ENCODE measurements at regions of chr3 and their contacts with region 1.

Region 1: GRCh38 chr3:198051836-198052235 is 91.8 kb downstream of the LMLN start:
- DNase-seq: no peak
- ATAC-seq: no peak
- H3K4me3 Mint-ChIP-seq: no peak overlapping the region
- H3K27ac Mint-ChIP-seq: no peak overlapping the region
- H3K4me1 Mint-ChIP-seq: no peaks in the 10 kb centered on the region
- H3K27me3 Mint-ChIP-seq: peaks cover 6% of the 10 kb centered on the region
- CTCF ChIP-seq: no peak

Region 2: DNA sequence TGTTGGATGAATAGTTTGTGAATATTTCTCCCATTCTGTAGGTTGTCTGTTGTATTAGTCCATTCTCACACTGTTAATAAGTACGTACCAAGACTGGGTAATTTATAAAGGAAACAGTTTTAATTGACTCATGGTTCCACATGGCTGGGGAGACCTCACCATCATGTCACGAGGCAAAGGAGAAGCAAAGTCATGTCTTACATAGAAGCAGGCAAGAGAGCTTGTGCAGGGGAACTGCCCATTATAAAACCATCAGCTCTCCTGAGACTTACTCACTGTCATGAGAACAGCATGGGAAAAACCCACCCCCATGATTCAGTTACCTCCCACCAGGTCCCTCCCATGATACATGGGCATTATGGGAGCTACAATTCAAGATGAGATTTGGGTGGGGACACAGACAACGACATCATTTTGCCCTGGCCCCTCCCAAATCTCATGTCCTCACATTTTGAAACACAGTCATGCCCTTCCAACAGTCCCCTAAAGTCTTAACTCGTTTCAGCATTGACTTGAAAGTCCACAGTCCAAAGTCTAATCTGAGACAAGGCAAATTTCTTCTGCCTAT is 41.4 kb after region 1 on chr3:
- CTCF ChIA-PET with region 1: interaction called, 11 read pairs
- POLR2A ChIA-PET with region 1: no interaction called
- intact Hi-C with region 1: no loop called
- DNase-seq: no peak
- ATAC-seq: no peak
- H3K4me3 Mint-ChIP-seq: no peak overlapping the region
- H3K27ac Mint-ChIP-seq: no peak overlapping the region
- H3K4me1 Mint-ChIP-seq: no peaks in the 10 kb centered on the region
- H3K27me3 Mint-ChIP-seq: peaks cover 19% of the 10 kb centered on the region
- CTCF ChIP-seq: no peak

Measured in activated CD8-positive, alpha-beta T cell treated with anti-CD3 and anti-CD28 coated beads for 36 hours (primary cell).